ENCODE measurements at regions of chr10 and their contacts with region 1.

Region 1: GRCh38 chr10:93554760-93555432 is 11.6 kb upstream of the FFAR4 start:
- H3K4me3 Mint-ChIP-seq: peak overlapping the region; percentile 20
- H3K27ac Mint-ChIP-seq: peak overlapping the region; percentile 93
- H3K4me1 Mint-ChIP-seq: peaks cover 32% of the 10 kb centered on the region
- H3K27me3 Mint-ChIP-seq: no peaks in the 10 kb centered on the region

Region 2: DNA sequence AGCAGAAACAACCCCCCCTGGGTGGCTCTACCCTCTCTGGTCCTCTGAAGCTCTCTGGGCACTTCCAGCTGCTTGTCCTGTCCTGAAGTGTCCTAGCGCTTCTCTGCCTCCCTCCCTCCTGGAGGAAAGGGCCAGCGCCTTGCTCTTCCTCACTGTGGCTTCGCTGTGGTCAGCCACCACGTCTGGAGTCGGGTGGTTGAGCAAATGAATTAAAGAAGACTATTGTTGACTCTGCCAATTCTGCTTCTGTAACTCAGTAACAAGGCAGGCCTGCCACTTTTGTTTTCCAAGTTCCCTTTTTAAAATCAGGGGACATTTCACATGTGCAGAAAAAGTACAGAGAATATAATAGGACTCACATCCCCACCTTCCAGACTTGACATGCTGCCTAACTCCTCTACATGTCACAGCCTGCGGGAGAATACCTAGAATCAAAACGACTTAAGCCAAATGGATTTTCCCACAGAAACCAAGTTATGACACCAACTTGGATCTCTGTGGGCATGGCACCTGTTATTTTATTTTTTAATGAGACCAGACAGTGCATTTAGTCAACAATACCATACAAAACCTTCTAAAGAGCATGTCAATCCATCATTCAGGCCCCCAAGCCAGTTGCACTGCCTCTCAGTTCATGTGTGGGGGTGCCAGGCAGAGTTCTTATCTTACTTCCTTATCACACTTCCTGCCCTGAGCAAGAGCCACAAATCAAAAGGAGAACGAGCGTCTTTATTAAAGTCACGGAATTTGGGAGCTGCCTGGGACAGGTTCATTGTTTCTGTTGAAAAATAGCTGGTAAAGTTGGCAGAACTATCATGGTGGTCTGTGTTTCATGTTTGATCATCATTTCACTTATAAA is 18.4 kb after region 1 on chr10:
- intact Hi-C with region 1: loop called (anchors 2 kb)
- H3K4me3 Mint-ChIP-seq: peak overlapping the region; percentile 31
- H3K27ac Mint-ChIP-seq: peak overlapping the region; percentile 71
- H3K4me1 Mint-ChIP-seq: peaks cover 72% of the 10 kb centered on the region
- H3K27me3 Mint-ChIP-seq: peaks cover 21% of the 10 kb centered on the region

Region 3: DNA sequence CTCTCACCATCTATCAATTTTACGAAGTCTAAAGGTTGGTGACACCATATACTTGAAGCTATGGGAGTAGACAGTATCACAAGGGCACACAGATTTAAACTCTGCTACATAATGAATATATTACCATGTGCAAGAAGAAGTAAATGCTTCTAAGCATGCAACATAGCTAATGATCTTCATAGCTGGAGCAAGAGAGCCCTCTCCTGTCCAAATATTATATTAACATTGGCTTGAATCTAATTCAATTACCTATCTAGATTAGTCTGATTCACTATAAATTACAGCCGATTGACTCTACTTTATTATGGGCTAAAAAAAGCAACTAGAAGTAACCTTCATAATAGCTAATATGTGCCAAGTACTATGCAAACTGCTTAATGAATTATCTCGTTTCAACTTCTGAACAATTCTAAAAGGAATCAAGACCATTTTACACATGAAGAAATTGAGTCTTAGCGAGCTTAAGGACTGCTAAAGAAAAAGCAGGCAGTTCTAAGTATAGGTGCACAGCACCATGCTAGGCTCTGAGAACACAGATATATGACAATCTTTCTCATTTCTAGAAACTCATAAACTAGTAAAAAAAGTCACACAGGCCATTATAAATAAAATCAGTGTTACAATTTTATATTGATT is 125.6 kb after region 1 on chr10:
- intact Hi-C with region 1: loop called (anchors 1 kb)
- H3K4me3 Mint-ChIP-seq: no peak overlapping the region
- H3K27ac Mint-ChIP-seq: no peak overlapping the region
- H3K4me1 Mint-ChIP-seq: peaks cover 10% of the 10 kb centered on the region
- H3K27me3 Mint-ChIP-seq: no peaks in the 10 kb centered on the region